HAP-1 (cell line): ENCODE measurements at regions of chr1 and their contacts with region 1.

Region 1: DNA sequence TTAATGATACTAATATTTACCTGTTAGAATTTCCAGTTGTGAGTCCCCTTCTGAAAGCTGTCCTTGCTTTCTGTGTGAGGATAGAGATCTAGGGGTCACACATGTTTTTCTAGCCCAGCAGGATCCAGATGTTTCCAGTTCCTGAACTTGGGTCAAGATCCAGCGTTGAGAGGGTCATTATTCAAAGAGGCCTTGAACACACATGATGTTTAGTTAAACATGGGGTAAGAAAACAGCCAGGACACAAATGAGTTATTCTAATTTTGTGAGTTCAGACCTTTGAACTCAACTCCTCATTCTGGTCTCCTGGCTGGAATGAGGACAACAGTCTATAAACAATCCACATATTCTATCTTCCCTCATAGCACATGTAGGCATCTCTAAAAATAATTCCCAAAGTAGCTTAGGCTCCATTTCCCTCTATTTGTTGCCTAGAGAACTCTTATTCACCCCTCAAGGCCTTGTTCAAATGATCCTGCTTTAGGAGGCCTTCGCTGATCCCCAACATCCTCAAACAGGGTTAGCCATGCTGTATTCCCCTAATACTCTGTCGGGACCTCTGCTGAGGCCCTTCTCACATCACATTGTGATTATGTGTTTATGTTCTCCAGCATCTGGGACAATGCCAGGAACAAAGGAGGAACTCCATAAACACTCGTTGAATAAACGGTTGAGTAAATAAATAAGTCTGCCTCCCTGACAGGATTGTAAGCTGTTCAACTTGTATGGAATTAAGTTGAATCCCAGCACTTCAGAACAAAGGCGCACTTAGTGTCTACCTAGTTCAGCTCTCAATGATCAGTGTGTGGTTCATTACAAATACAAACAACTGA is 15.0 kb upstream of the KCNN3 start:
- DNase-seq: no peak
- H3K4me3 ChIP-seq: no peak overlapping the region
- H3K4me1 ChIP-seq: peaks cover 9% of the 10 kb centered on the region
- H3K27me3 ChIP-seq: no peaks in the 10 kb centered on the region

Region 2: GRCh38 chr1:154669464-154670282 is 215.4 kb before region 1 on chr1:
- in situ Hi-C with region 1: loop called (anchors 10 kb)
- DNase-seq: peak; percentile 69 to 78
- H3K4me3 ChIP-seq: no peak overlapping the region
- H3K4me1 ChIP-seq: 0 out of 2 replicates have a peak, but pooled peaks cover 6% of the 10 kb centered on the region
- H3K27me3 ChIP-seq: no peaks in the 10 kb centered on the region

Region 3: DNA sequence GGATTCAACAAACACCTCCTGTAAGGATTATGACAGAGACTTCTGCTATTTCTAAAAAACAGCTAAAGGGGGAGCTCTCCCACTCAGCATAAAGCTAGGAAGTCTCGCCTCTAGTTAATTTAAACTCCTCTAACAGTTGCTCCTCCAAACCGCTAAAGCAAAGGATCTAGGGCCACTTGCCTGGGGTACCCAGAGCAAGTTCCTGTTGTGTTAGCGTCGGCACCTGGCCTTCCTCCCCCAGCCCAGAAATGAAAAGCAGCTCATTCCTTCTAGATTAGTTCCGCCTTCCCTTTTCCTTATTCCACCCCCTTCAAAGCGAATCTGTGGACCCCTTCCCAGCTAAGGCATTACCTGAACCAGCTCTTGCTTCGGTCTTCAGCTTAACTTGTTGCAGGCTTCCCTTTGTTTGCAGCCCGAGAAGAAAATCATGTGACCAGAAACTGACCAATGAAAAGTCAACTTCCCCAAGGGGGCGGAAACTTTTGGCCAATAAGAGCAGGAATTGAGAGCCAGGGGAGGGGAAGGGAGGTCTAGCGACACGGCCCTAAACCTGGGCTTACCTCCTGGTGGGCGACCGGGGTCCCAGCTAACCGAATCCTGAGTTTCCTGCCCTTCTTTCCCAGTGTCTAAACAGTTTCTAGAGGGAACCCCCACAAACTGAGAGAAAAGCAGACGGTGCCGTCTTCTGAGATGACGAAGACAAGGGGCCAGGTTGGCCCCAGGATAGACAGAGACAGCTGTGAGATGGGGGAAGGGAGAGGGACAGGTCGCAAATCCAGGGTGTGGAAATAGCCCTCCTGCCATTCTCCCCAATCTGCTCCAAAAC is 70.8 kb after region 1 on chr1 and contains the start of gene PBXIP1:
- in situ Hi-C with region 1: no loop called
- DNase-seq: peak; percentile 91
- H3K4me3 ChIP-seq: peak within 1 kb of the TSS; percentile 36
- H3K4me1 ChIP-seq: peaks cover 25% of the 10 kb centered on the region
- H3K27me3 ChIP-seq: no peaks in the 10 kb centered on the region